Activated T-helper 2 cell treated with anti-CD3 and anti-CD28 coated beads, Interferon-gamma antibody, Interleukin-2, Interleukin-4, amounts not matched to agents 10 μg/mL and 5 μg/mL and 100 μg/mL, durations not matched to agents 14 hours and 24 hours and 36 hours (primary cell): ENCODE measurements at regions of chr5 and their contacts with region 1.

Region 1: DNA sequence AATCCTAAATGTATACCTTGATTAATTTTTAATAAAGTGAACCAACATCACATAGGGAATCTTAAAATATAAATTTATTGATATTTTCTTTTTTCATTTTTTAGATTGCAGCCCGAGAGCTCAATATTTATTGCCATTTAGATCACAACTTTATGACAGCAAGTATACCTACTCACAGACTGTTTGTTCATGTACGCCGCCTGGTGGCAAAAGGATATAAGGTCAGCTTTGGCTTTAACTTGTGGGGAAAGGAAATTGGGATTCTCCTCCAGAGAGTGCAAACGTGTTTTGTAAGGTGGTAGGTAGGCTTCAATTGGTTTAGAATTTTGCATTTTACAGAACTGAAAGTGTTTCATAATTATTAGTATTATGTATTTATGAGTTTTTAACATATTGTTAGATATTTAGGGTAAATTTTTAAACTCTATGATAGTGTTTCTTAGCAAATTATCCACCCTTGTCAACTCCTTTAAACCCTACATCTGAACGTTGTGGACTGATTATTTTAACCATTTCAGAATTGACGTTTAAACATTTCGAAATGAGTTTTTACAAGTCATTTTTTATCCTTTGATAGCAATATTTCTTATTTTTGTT is 17.5 kb upstream of the DHFR start:
- DNase-seq: peak; percentile 43
- H3K4me3 Mint-ChIP-seq: no peak overlapping the region
- H3K27ac Mint-ChIP-seq: no peak overlapping the region
- H3K4me1 Mint-ChIP-seq: peaks cover 5% of the 10 kb centered on the region
- H3K27me3 Mint-ChIP-seq: no peaks in the 10 kb centered on the region

Region 2: GRCh38 chr5:80093796-80094195 is 578.4 kb before region 1 on chr5:
- intact Hi-C with region 1: loop called (anchors 5 kb)
- DNase-seq: no peak
- H3K4me3 Mint-ChIP-seq: no peak overlapping the region
- H3K27ac Mint-ChIP-seq: no peak overlapping the region
- H3K4me1 Mint-ChIP-seq: peaks cover 26% of the 10 kb centered on the region
- H3K27me3 Mint-ChIP-seq: no peaks in the 10 kb centered on the region

Region 3: DNA sequence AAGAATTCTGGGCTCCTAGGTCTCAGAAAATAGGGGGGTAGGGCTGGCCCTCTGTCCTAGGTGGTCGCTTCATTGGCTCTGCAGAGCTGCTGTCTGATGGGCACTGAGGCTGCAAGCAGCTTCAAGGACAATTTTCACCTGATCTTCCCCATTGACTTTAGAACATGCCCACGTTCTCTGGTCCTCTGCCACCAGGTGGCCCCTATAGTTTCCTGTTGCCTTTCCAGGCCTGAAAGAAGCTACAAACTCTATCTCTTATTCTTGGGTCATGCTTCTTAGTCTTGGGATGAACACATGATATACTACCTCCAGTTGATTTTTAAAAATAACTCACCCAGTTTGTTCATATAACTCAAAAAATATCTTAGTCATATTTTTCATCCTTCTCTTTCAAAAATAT is 326.2 kb before region 1 on chr5:
- intact Hi-C with region 1: loop called (anchors 5 kb)
- DNase-seq: no peak
- H3K4me3 Mint-ChIP-seq: no peak overlapping the region
- H3K27ac Mint-ChIP-seq: no peak overlapping the region
- H3K4me1 Mint-ChIP-seq: peaks cover 4% of the 10 kb centered on the region
- H3K27me3 Mint-ChIP-seq: peaks cover 6% of the 10 kb centered on the region

Region 4: GRCh38 chr5:80481019-80481893 is 191.0 kb before region 1 on chr5:
- intact Hi-C with region 1: loop called (anchors 5 kb)
- DNase-seq: peak; percentile 24
- H3K4me3 Mint-ChIP-seq: no peak overlapping the region
- H3K27ac Mint-ChIP-seq: no peak overlapping the region
- H3K4me1 Mint-ChIP-seq: peaks cover 7% of the 10 kb centered on the region
- H3K27me3 Mint-ChIP-seq: no peaks in the 10 kb centered on the region